AG04450 (cell line): ENCODE measurements at regions of chr6 and their contacts with region 1.

Region 1: GRCh38 chr6:54559136-54559535 is 250.9 kb downstream of the TINAG start:
- DNase-seq: no peak
- H3K4me3 ChIP-seq: no peak overlapping the region
- H3K27ac ChIP-seq: no peak overlapping the region
- H3K27me3 ChIP-seq: no peaks in the 10 kb centered on the region
- CTCF ChIP-seq: no peak

Region 2: GRCh38 chr6:54327631-54328030 is 231.5 kb before region 1 on chr6:
- CTCF ChIA-PET with region 1: no interaction called
- POLR2A ChIA-PET with region 1: interaction called, 10 read pairs
- DNase-seq: no peak
- H3K4me3 ChIP-seq: no peak overlapping the region
- H3K27ac ChIP-seq: no peak overlapping the region
- H3K27me3 ChIP-seq: no peaks in the 10 kb centered on the region
- CTCF ChIP-seq: no peak